ENCODE measurements at regions of chr1 and their contacts with region 1.

Region 1: GRCh38 chr1:99481391-99481996 is 164.4 kb upstream of the PALMD start:
- DNase-seq: peak; percentile 75
- H3K4me3 ChIP-seq: no peak overlapping the region
- H3K27ac ChIP-seq: no peak overlapping the region
- H3K4me1 ChIP-seq: no peaks in the 10 kb centered on the region
- H3K27me3 ChIP-seq: no peaks in the 10 kb centered on the region
- CTCF ChIP-seq: peak; percentile 51 to 52
- POLR2A ChIP-seq: no peak

Region 2: DNA sequence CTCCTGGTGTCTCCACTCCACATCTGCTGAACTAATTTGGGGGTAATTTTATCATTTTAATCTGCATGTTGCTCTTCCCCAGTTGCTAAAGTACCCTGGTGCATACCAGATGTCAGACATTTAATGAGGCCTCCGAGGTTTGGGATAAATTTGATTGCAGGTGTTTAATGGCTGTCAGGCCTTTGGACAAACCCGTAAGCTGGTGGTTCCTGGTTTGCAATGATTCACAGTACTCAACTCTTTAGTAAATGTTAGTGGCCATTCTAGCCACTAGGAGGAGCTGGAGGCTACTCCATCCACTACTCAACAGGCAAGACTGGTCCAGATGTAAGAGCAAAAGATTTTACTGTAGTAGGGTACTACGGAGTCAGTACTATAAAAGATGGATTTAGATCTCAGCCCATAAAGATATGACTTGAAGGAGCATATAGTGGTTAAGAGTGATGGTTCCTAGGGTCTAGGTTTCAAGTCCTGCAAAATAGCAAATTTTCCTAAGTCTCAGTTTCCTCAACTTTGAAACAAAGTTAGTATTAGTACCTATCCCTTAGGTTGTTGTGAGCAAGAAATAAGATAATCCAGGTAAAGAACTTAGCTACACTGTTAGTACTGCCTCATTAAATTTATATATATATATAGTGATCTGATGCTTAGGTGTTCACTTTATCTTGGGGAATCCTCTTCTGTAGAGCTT is 687.2 kb before region 1 on chr1:
- CTCF ChIA-PET with region 1: interaction called, 36 read pairs
- POLR2A ChIA-PET with region 1: no interaction called
- dilution Hi-C with region 1: no loop called
- intact Hi-C with region 1: loop called (anchors 1 kb)
- DNase-seq: peak; percentile 80
- H3K4me3 ChIP-seq: no peak overlapping the region
- H3K27ac ChIP-seq: no peak overlapping the region
- H3K4me1 ChIP-seq: no peaks in the 10 kb centered on the region
- H3K27me3 ChIP-seq: peaks cover 13 to 18% of the 10 kb centered on the region in 2 experiments
- CTCF ChIP-seq: peak; percentile 62 to 69
- POLR2A ChIP-seq: no peak

Region 3: GRCh38 chr1:99326215-99326949 is 155.1 kb before region 1 on chr1:
- CTCF ChIA-PET with region 1: interaction called, 14 read pairs
- POLR2A ChIA-PET with region 1: no interaction called
- dilution Hi-C with region 1: no loop called
- intact Hi-C with region 1: loop called (anchors 1 kb)
- DNase-seq: peak; percentile 16
- H3K4me3 ChIP-seq: no peak overlapping the region
- H3K27ac ChIP-seq: no peak overlapping the region
- H3K4me1 ChIP-seq: no peaks in the 10 kb centered on the region
- H3K27me3 ChIP-seq: no peaks in the 10 kb centered on the region
- CTCF ChIP-seq: peak in 1 of 2 donors; percentile 32
- POLR2A ChIP-seq: no peak

Region 4: DNA sequence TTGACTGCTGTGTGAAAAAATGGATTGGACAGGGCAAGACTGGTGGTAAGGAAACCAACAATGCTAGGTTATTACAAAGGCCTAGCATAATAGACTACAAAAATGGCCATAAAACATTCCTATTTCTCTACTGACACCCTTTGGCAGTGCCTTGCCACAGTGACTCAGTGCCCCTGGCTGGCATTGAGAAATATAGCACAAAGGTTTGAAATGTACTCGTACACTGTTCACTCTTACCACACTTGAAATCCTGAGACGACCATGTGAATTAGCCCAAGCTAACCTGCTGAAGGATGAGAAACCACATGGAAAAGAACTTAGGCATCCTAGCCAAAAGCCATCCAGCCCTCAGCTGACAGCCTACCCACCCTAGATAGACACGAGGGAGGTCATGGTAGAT is 14.6 kb after region 1 on chr1:
- CTCF ChIA-PET with region 1: interaction called, 12 read pairs
- POLR2A ChIA-PET with region 1: no interaction called
- dilution Hi-C with region 1: no loop called
- intact Hi-C with region 1: no loop called
- DNase-seq: no peak
- H3K4me3 ChIP-seq: no peak overlapping the region
- H3K27ac ChIP-seq: no peak overlapping the region
- H3K4me1 ChIP-seq: no peaks in the 10 kb centered on the region
- H3K27me3 ChIP-seq: no peaks in the 10 kb centered on the region
- CTCF ChIP-seq: no peak
- POLR2A ChIP-seq: no peak

Region 5: DNA sequence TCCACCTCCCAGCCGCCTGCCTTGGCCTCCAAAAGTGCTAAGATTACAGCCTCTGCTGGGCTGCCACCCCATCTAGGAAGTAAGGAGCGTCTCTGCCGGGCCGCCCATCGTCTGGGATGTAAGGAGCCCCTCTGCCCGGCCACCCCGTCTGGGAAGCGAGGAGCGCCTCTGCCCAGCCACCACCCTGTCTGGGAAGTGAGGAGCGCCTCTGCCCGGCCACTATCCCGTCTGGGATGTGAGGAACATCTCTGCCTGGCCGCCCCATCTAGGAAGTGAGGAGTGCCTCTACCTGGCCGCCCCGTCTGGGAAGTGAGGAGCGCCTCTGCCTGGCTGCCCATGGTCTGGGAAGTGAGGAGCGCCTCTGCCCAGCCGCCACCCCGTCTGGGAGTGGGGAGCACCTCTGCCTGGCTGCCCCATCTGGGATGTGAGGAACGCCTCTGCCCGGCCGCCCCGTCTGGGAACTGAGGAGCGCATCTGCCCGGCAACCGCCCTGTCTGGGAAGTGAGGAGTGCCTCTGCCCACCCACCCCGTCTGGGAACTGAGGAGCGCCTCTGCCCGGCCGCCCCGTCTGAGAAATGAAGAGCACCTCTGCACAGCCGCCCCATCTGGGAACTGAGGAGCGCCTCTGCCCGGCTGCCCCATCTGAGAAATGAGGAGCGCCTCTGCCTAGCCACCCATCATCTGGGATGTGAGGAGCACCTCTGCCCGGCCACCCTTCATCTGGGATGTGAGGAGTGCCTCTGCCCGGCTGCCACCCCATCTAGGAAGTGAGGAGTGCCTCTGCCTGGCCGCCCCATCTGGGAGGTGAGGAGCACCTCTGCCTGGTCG is 26.6 kb after region 1 on chr1:
- CTCF ChIA-PET with region 1: no interaction called
- POLR2A ChIA-PET with region 1: no interaction called
- dilution Hi-C with region 1: no loop called
- intact Hi-C with region 1: no loop called
- DNase-seq: no peak
- H3K4me3 ChIP-seq: no peak overlapping the region
- H3K27ac ChIP-seq: no peak overlapping the region
- H3K4me1 ChIP-seq: no peaks in the 10 kb centered on the region
- H3K27me3 ChIP-seq: no peaks in the 10 kb centered on the region
- CTCF ChIP-seq: no peak
- POLR2A ChIP-seq: no peak

Region 6: DNA sequence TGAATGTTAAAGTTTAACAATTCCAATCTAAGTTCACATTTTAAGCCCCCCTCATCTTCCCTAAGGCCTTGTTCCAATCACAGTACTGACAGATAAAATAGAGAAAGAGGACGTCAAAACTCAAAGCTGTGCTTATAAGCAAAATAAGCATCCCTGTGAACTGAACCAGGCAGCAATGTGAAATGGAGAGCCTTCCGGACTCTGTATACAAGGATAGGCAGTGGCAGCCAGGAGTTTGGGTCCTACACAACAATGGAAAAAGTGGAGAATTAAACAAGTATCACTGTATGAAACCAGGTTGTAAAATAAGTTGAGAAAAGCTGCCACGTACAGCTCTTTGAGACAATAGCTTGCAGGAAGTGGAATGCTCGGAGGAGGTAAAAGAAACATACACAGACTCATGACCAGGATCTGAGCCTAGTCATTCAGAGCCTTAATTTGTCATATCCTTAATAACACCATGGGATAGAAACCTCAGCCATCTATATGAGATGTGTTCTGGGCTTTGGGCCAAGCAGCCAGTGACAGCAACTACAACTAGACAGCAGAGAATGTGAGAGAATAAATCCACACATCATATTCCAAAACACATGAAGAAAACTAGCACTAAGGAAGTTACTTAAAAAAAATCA is 109.2 kb after region 1 on chr1:
- CTCF ChIA-PET with region 1: interaction called, 5 read pairs
- POLR2A ChIA-PET with region 1: no interaction called
- dilution Hi-C with region 1: no loop called
- intact Hi-C with region 1: loop called (anchors 2 kb)
- DNase-seq: peak; percentile 99
- H3K4me3 ChIP-seq: no peak overlapping the region
- H3K27ac ChIP-seq: peak overlapping the region; percentile 97
- H3K4me1 ChIP-seq: peaks cover 59% of the 10 kb centered on the region
- H3K27me3 ChIP-seq: no peaks in the 10 kb centered on the region
- CTCF ChIP-seq: no peak
- POLR2A ChIP-seq: peak; percentile 61

Region 7: GRCh38 chr1:99621340-99621901 is 139.9 kb after region 1 on chr1:
- CTCF ChIA-PET with region 1: no interaction called
- POLR2A ChIA-PET with region 1: no interaction called
- dilution Hi-C with region 1: no loop called
- intact Hi-C with region 1: no loop called
- DNase-seq: no peak
- H3K4me3 ChIP-seq: no peak overlapping the region
- H3K27ac ChIP-seq: no peak overlapping the region
- H3K4me1 ChIP-seq: no peaks in the 10 kb centered on the region
- H3K27me3 ChIP-seq: no peaks in the 10 kb centered on the region
- CTCF ChIP-seq: no peak
- POLR2A ChIP-seq: no peak

Region 8: DNA sequence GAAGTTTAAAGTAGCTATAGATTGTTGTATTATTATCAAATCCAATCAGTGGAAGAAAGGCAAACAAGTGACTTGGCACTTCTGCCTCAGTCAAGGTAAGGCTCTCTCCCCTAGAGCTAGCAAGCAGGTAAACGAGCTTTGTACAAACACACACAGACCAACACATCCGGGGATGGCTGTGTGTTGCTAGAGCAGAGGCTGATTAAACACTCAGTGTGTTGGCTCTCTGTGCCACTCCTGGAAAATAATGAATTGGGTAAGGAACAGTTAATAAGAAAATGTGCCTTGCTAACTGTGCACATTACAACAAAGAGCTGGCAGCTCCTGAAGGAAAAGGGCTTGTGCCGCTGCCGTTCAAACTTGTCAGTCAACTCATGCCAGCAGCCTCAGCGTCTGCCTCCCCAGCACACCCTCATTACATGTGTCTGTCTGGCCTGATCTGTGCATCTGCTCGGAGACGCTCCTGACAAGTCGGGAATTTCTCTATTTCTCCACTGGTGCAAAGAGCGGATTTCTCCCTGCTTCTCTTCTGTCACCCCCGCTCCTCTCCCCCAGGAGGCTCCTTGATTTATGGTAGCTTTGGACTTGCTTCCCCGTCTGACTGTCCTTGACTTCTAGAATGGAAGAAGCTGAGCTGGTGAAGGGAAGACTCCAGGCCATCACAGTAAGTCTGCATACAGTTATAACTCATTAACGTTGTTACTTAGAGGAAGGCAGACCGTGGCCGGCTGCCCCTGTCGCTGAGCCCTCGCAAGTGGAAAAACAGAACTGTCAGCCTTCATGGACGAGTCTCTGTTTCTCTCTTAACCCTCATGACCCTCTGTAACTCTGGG is 164.4 kb after region 1 on chr1 and contains the start of gene PALMD:
- CTCF ChIA-PET with region 1: interaction called, 47 read pairs
- POLR2A ChIA-PET with region 1: interaction called, 3 read pairs
- dilution Hi-C with region 1: no loop called
- intact Hi-C with region 1: loop called (anchors 1 kb)
- DNase-seq: peak; percentile 86
- H3K4me3 ChIP-seq: peak within 1 kb of the TSS; percentile 68 to 99 (median 90)
- H3K27ac ChIP-seq: peak within 1 kb of the TSS; percentile 94
- H3K4me1 ChIP-seq: peaks cover 42% of the 10 kb centered on the region
- H3K27me3 ChIP-seq: no peaks in the 10 kb centered on the region
- CTCF ChIP-seq: no peak
- POLR2A ChIP-seq: peak; percentile 93
- total RNA-seq, gene PALMD: 137 and 140 TPM in 2 replicates

Region 9: GRCh38 chr1:99737016-99737415 is 255.5 kb after region 1 on chr1:
- CTCF ChIA-PET with region 1: no interaction called
- POLR2A ChIA-PET with region 1: no interaction called
- dilution Hi-C with region 1: no loop called
- intact Hi-C with region 1: loop called (anchors 1 kb)
- DNase-seq: peak; percentile 84
- H3K4me3 ChIP-seq: no peak overlapping the region
- H3K27ac ChIP-seq: no peak overlapping the region
- H3K4me1 ChIP-seq: no peaks in the 10 kb centered on the region
- H3K27me3 ChIP-seq: no peaks in the 10 kb centered on the region
- CTCF ChIP-seq: peak; percentile 40 to 50
- POLR2A ChIP-seq: no peak

Measured in endothelial cell of umbilical vein (primary cell).